Caco-2 (cell line): ENCODE measurements at regions of chr5 and their contacts with region 1.

Region 1: GRCh38 chr5:122076664-122077365 is 1.2 kb downstream of the LOX start:
- DNase-seq: peak; percentile 88 to 91
- H3K4me3 ChIP-seq: peak overlapping the region; percentile 55
- H3K4me3 Mint-ChIP-seq: peak overlapping the region; percentile 91
- H3K27ac Mint-ChIP-seq: peak overlapping the region; percentile 57
- H3K4me1 ChIP-seq: 0 out of 2 replicates have a peak, but pooled peaks cover 6% of the 10 kb centered on the region
- H3K4me1 Mint-ChIP-seq: peaks cover 7% of the 10 kb centered on the region
- H3K27me3 ChIP-seq: no peaks in the 10 kb centered on the region; the same call in 1 of the 2 replicates
- H3K27me3 Mint-ChIP-seq: no peaks in the 10 kb centered on the region
- CTCF ChIP-seq: peak; percentile 89 to 93

Region 2: GRCh38 chr5:121870489-121870888 is 206.3 kb before region 1 on chr5:
- CTCF ChIA-PET with region 1: no interaction called
- POLR2A ChIA-PET with region 1: no interaction called
- intact Hi-C with region 1: loop called (anchors 10 kb)
- DNase-seq: peak in 1 of 2 experiments; percentile 8
- H3K4me3 ChIP-seq: no peak overlapping the region
- H3K4me3 Mint-ChIP-seq: no peak overlapping the region
- H3K27ac Mint-ChIP-seq: no peak overlapping the region
- H3K4me1 ChIP-seq: no peaks in the 10 kb centered on the region
- H3K4me1 Mint-ChIP-seq: no peaks in the 10 kb centered on the region
- H3K27me3 ChIP-seq: no peaks in the 10 kb centered on the region
- H3K27me3 Mint-ChIP-seq: no peaks in the 10 kb centered on the region
- CTCF ChIP-seq: peak; percentile 17 to 21

Region 3: GRCh38 chr5:121962347-121962670 is 114.5 kb before region 1 on chr5:
- CTCF ChIA-PET with region 1: interaction called, 11 read pairs
- POLR2A ChIA-PET with region 1: interaction called, 7 read pairs
- intact Hi-C with region 1: loop called (anchors 1 kb)
- DNase-seq: no peak
- H3K4me3 ChIP-seq: peak overlapping the region; percentile 77
- H3K4me3 Mint-ChIP-seq: peak overlapping the region; percentile 84
- H3K27ac Mint-ChIP-seq: peak overlapping the region; percentile 93
- H3K4me1 ChIP-seq: no peaks in the 10 kb centered on the region
- H3K4me1 Mint-ChIP-seq: peaks cover 12% of the 10 kb centered on the region
- H3K27me3 ChIP-seq: no peaks in the 10 kb centered on the region
- H3K27me3 Mint-ChIP-seq: peaks cover 6% of the 10 kb centered on the region
- CTCF ChIP-seq: no peak

Region 4: GRCh38 chr5:121987685-121988073 is 89.1 kb before region 1 on chr5:
- CTCF ChIA-PET with region 1: no interaction called
- POLR2A ChIA-PET with region 1: no interaction called
- intact Hi-C with region 1: loop called (anchors 5 kb)
- DNase-seq: no peak
- H3K4me3 ChIP-seq: no peak overlapping the region
- H3K4me3 Mint-ChIP-seq: no peak overlapping the region
- H3K27ac Mint-ChIP-seq: no peak overlapping the region
- H3K4me1 ChIP-seq: no peaks in the 10 kb centered on the region
- H3K4me1 Mint-ChIP-seq: peaks cover 8% of the 10 kb centered on the region
- H3K27me3 ChIP-seq: no peaks in the 10 kb centered on the region
- H3K27me3 Mint-ChIP-seq: no peaks in the 10 kb centered on the region
- CTCF ChIP-seq: no peak

Region 5: DNA sequence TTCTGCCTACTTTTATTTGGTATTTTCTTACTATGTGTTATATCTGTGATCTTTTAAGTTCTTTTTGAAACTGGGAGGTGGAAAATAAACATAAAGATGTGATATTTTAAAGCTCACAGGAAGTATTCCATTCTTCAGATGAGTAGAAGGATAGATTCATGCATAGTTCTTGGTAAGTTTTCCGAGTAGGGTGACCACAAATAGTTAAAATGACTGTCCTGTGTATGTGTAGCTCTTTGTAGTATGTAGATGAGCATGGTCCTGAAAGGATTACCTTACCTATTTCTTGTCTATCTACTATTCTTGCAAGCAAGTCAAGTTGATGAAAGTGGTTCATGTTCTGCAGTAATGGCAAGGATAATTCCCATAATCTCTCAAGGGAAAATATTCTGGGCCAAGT is 67.4 kb before region 1 on chr5:
- CTCF ChIA-PET with region 1: no interaction called
- POLR2A ChIA-PET with region 1: no interaction called
- intact Hi-C with region 1: no loop called
- DNase-seq: no peak
- H3K4me3 ChIP-seq: no peak overlapping the region
- H3K4me3 Mint-ChIP-seq: no peak overlapping the region
- H3K27ac Mint-ChIP-seq: no peak overlapping the region
- H3K4me1 ChIP-seq: no peaks in the 10 kb centered on the region
- H3K4me1 Mint-ChIP-seq: no peaks in the 10 kb centered on the region
- H3K27me3 ChIP-seq: no peaks in the 10 kb centered on the region
- H3K27me3 Mint-ChIP-seq: no peaks in the 10 kb centered on the region
- CTCF ChIP-seq: no peak

Region 6: GRCh38 chr5:122030251-122030650 is 46.6 kb before region 1 on chr5:
- CTCF ChIA-PET with region 1: interaction called, 48 read pairs
- POLR2A ChIA-PET with region 1: no interaction called
- intact Hi-C with region 1: loop called (anchors 1 kb)
- DNase-seq: peak; percentile 69 to 71
- H3K4me3 ChIP-seq: no peak overlapping the region
- H3K4me3 Mint-ChIP-seq: no peak overlapping the region
- H3K27ac Mint-ChIP-seq: peak overlapping the region; percentile 29
- H3K4me1 ChIP-seq: peaks cover 40% of the 10 kb centered on the region
- H3K4me1 Mint-ChIP-seq: peaks cover 34% of the 10 kb centered on the region
- H3K27me3 ChIP-seq: no peaks in the 10 kb centered on the region
- H3K27me3 Mint-ChIP-seq: no peaks in the 10 kb centered on the region
- CTCF ChIP-seq: peak; percentile 27 to 68

Region 7: GRCh38 chr5:122035913-122036312 is 40.9 kb before region 1 on chr5:
- CTCF ChIA-PET with region 1: interaction called, 48 read pairs
- POLR2A ChIA-PET with region 1: interaction called, 3 read pairs
- intact Hi-C with region 1: loop called (anchors 1 kb)
- DNase-seq: peak; percentile 82 to 92
- H3K4me3 ChIP-seq: no peak overlapping the region
- H3K4me3 Mint-ChIP-seq: peak overlapping the region; percentile 50
- H3K27ac Mint-ChIP-seq: peak overlapping the region; percentile 31
- H3K4me1 ChIP-seq: peaks cover 63% of the 10 kb centered on the region
- H3K4me1 Mint-ChIP-seq: peaks cover 76% of the 10 kb centered on the region
- H3K27me3 ChIP-seq: no peaks in the 10 kb centered on the region
- H3K27me3 Mint-ChIP-seq: no peaks in the 10 kb centered on the region
- CTCF ChIP-seq: no peak

Region 8: GRCh38 chr5:122129306-122129705 is 52.5 kb after region 1 on chr5 and contains the start of gene ZNF474:
- CTCF ChIA-PET with region 1: no interaction called
- POLR2A ChIA-PET with region 1: no interaction called
- intact Hi-C with region 1: no loop called
- DNase-seq: peak in 1 of 2 experiments; percentile 17
- H3K4me3 ChIP-seq: no peak within 1 kb of the TSS
- H3K4me3 Mint-ChIP-seq: no peak within 1 kb of the TSS
- H3K27ac Mint-ChIP-seq: no peak within 1 kb of the TSS
- H3K4me1 ChIP-seq: no peaks in the 10 kb centered on the region
- H3K4me1 Mint-ChIP-seq: no peaks in the 10 kb centered on the region
- H3K27me3 ChIP-seq: no peaks in the 10 kb centered on the region
- H3K27me3 Mint-ChIP-seq: peaks cover 9% of the 10 kb centered on the region
- CTCF ChIP-seq: no peak
- total RNA-seq, gene ZNF474: not detected in 2 replicates